CD14-positive monocyte (primary cell): ENCODE measurements at regions of chr1 and their contacts with region 1.

Region 1: DNA sequence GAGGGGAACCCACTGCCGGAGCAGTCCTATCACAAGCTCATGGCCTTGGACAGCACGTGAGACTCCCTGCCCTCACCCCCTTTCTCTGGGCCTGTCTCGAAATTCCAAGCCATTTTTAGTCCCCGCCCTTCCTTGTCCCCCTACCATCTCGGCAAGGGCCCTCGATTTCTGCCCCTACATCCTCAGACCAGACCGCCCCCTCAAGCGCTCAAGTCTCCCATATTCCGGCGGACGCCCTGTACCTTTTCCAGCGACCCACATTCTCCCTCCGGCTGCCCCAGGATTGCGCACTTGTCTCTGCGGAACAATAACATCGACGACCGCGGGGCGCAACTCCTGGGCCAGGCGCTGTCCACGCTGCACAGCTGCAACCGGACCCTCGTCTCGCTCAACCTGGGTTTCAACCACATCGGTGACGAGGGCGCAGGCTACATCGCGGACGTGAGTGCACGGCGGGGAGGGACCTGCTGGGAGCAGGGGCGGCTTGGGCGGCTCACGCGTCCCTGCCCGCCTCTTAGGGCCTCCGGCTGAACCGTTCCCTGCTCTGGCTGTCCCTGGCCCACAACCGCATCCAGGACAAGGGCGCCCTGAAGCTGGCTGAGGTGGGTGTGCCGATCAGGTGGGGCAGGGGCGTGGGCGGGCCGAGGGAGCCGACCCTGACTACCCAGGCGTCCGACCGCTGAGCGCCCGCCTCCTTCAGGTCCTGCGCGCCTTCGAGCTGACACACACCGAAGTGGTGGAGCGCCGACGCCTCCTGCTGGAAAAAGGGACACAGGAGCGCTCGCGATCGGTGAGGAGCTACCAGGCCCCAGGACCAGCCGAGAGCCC is 7.0 kb downstream of the LRRC71 start:
- DNase-seq: peak; percentile 40 to 62 (median 47)
- H3K4me3 ChIP-seq: peak overlapping the region in 1 of 3 experiments; percentile 23
- H3K4me3 Mint-ChIP-seq: peak overlapping the region in 1 of 2 donors; percentile 87
- H3K27ac ChIP-seq: no peak overlapping the region
- H3K27ac Mint-ChIP-seq: peak overlapping the region in 1 of 7 donors; percentile 62
- H3K4me1 ChIP-seq: peaks cover 27 to 39% of the 10 kb centered on the region in 2 donors
- H3K4me1 Mint-ChIP-seq: peaks cover 44% of the 10 kb centered on the region
- H3K27me3 ChIP-seq: peaks cover 45 to 67% of the 10 kb centered on the region in 2 donors
- H3K27me3 Mint-ChIP-seq: peaks cover 75 to 80% (median 78%) of the 10 kb centered on the region in 3 donors
- CTCF ChIP-seq: peak; percentile 70

Region 2: DNA sequence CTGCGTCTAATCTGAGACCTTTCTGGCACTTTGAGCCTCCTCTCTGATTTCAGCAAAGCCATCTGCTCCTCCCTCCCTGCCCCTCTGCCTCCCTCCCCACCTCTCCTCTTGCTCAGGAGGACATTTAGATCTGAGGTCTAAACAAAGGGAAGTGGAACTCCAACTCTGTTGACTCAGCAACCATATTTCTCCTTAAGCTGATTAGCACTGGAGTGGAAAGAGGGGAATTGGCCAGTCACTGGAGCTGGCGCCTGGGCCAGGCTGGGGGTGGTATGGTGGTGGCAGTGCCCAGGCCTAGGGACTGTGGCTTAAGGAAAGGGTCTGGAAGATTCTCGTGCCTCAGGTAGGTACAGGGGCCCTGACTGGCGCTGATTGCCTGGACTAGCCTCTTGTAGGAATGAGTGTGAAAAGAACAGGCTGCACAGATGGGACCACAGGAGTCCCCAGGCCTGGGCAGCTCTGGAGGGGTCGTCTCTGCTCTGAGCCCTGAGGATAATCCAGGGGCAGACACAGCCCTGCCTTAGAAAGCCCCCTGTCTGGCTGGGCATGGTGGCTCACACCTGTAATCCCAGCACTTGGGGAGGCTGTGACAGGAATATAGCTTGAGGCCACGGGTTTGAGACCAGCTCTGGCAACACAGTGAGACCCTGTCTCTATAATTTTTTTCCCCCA is 122.7 kb before region 1 on chr1:
- intact Hi-C with region 1: no loop called
- DNase-seq: peak; percentile 49 to 66 (median 66)
- H3K4me3 ChIP-seq: no peak overlapping the region
- H3K4me3 Mint-ChIP-seq: peak overlapping the region in 1 of 2 donors; percentile 78
- H3K27ac ChIP-seq: peak overlapping the region; percentile 23 to 27
- H3K27ac Mint-ChIP-seq: peak overlapping the region; percentile 8 to 85 (median 70)
- H3K4me1 ChIP-seq: peaks cover 14 to 15% of the 10 kb centered on the region in 2 donors
- H3K4me1 Mint-ChIP-seq: peaks cover 21% of the 10 kb centered on the region
- H3K27me3 ChIP-seq: no peaks in the 10 kb centered on the region
- H3K27me3 Mint-ChIP-seq: peaks cover under 1 to 6% (median 5%) of the 10 kb centered on the region in 3 donors
- CTCF ChIP-seq: no peak

Region 3: DNA sequence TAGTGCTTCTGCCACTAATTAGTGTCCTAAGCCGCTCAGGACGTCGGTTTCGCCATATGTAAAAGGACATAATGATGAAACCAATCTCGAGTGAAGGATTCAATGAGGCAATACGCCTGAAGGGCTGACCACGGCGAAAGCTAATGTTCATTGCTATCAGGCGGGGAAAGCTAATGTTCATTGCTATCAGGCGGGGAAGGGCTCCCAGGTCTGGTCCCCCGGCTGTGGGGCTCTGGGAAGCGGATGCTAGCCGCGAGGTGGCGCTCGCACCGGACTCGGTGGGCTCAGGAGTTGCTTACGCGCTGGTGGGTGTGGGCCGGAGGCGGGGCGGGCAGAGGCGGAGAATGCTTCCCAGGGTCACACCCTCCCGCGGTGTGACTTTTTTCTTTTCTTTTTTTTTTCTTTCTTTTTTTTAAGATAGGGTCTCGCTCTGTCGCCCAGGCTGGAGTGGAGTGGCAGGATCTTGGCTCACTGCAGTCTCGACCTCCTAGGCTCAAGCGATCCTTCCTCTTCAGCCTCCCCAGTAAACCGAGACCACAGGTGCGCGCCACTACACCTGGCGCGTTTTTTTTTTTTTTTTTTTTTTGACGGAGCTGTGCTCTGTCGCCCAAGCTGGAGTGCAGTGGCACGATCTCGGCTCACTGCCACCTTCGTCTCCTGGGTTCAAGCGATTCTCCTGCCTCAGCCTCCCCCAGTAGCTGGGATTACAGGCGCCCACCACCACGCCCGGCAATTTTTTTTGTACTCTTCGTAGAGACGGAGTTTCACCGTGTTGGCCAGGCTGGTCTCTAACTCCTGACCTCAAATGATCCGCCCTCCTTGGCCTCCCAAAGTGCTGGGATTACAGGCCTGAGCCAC is 35.0 kb before region 1 on chr1:
- intact Hi-C with region 1: loop called (anchors 5 kb)
- DNase-seq: peak; percentile 79 to 91 (median 80)
- H3K4me3 ChIP-seq: peak overlapping the region; percentile 7 to 74 (median 17)
- H3K4me3 Mint-ChIP-seq: peak overlapping the region; percentile 73 to 87
- H3K27ac ChIP-seq: no peak overlapping the region
- H3K27ac Mint-ChIP-seq: peak overlapping the region in 3 of 7 donors; percentile 19 to 54 (median 48)
- H3K4me1 ChIP-seq: peaks cover 20 to 24% of the 10 kb centered on the region in 2 donors
- H3K4me1 Mint-ChIP-seq: peaks cover 20% of the 10 kb centered on the region
- H3K27me3 ChIP-seq: peaks cover 20 to 47% of the 10 kb centered on the region in 2 donors
- H3K27me3 Mint-ChIP-seq: peaks cover 53 to 68% (median 56%) of the 10 kb centered on the region in 3 donors
- CTCF ChIP-seq: peak; percentile 74

Region 4: GRCh38 chr1:157073944-157074767 is 146.7 kb after region 1 on chr1:
- intact Hi-C with region 1: loop called in 1 of 2 experiments (anchors 10 kb)
- DNase-seq: peak; percentile 49 to 68 (median 63)
- H3K4me3 ChIP-seq: peak overlapping the region in 1 of 3 experiments; percentile 39
- H3K4me3 Mint-ChIP-seq: peak overlapping the region; percentile 14 to 77
- H3K27ac ChIP-seq: no peak overlapping the region
- H3K27ac Mint-ChIP-seq: no peak overlapping the region
- H3K4me1 ChIP-seq: peaks cover 0 to 9% of the 10 kb centered on the region in 2 donors
- H3K4me1 Mint-ChIP-seq: peaks cover 11% of the 10 kb centered on the region
- H3K27me3 ChIP-seq: no peaks in the 10 kb centered on the region
- H3K27me3 Mint-ChIP-seq: peaks cover 2 to 15% (median 15%) of the 10 kb centered on the region in 3 donors
- CTCF ChIP-seq: peak; percentile 79